Activated CD4-positive, alpha-beta memory T cell treated with anti-CD3 and anti-CD28 coated beads, Interleukin-2, amount 10 ng/mL, durations not matched to agents 7 days and 5 days (primary cell): ENCODE measurements at regions of chr20 and their contacts with region 1.

Region 1: DNA sequence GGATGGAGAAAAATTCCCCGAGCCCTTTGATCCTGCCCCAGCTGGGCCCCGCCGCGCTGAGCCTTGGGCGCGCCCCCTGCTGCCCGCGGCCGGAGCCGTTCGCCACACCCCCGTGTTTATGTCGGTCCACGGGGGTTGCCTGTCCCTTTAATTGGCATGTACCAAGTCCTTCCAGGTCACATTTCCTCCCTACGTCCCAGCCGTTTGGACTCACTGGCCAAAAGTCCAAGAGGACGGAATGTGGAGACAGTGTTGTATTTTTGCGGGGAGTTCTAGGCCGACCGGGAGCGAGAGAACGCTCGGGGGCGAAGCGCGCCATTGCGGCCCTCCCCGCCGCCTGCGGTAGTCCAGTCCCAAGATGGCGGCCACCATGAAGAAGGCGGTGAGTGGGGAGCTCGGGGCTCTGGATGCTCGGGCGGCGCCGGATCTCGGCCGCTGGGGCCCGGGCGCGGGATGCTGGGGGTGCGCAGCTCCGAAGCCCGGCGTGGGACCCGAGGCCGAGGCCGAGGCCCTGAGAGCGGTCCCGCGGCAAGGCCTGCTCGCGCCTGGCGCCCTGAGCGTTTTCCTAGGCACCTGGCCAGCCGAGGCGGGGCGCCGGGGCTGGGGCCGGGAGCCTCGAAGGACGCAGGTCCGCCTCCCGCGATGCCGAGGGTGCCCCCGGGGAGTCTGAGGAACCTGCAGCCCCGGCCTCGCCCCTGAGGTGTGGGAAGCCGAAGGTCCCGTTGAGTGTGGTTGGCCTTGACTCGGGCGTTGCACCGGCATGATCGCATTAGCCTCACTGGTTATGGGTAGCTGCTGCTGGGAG is at the start of gene PFDN4:
- DNase-seq: peak; percentile 79
- H3K4me3 Mint-ChIP-seq: peak within 1 kb of the TSS; percentile 93
- H3K27ac Mint-ChIP-seq: peak within 1 kb of the TSS; percentile 96
- H3K4me1 Mint-ChIP-seq: peaks cover 21% of the 10 kb centered on the region
- H3K27me3 Mint-ChIP-seq: no peaks in the 10 kb centered on the region
- total RNA-seq, gene PFDN4: 28.1 to 30.3 TPM

Region 2: DNA sequence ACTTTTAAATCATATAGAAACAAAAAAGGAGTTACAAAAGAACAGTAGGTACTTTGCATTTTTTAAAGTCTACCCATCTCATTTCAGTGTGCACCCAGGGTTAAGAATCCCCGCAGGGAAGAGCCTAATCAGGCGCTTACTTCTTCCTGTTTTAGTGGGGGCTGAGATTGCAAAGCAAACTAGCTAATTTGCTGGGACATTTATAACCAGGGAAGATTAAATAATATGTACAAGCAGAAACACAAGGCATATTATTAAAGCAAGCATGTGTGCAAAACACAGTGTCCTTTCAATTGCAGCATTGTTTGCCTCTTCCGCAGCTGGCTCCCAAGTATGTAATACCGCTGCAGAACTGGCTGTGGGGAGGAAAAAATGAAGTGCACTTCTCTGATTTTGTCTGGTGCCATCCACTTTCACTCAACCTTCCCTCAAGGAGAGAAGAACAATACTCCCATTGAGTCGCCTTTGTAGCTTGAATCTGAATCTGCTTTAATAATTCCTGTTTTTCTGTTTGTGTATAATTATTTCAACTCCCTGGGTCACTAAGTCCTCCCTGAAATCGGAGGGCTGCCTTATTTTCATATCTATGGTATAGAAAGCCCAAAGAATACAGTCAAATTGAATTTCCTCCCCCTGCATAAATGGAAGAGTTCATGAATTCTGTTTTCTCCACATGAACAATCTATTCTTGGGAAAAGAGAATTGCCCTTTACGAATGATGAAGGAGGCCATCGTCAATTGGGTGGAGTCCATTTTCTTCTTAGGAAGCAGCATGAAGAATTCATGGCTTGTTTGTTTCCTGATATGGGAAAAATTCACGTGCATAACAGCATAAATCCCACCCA is 114.3 kb before region 1 on chr20:
- CTCF ChIA-PET with region 1: interaction called, 13 read pairs
- POLR2A ChIA-PET with region 1: interaction called, 8 read pairs
- DNase-seq: no peak
- H3K4me3 Mint-ChIP-seq: no peak overlapping the region
- H3K27ac Mint-ChIP-seq: no peak overlapping the region
- H3K4me1 Mint-ChIP-seq: no peaks in the 10 kb centered on the region
- H3K27me3 Mint-ChIP-seq: peaks cover 12% of the 10 kb centered on the region

Region 3: DNA sequence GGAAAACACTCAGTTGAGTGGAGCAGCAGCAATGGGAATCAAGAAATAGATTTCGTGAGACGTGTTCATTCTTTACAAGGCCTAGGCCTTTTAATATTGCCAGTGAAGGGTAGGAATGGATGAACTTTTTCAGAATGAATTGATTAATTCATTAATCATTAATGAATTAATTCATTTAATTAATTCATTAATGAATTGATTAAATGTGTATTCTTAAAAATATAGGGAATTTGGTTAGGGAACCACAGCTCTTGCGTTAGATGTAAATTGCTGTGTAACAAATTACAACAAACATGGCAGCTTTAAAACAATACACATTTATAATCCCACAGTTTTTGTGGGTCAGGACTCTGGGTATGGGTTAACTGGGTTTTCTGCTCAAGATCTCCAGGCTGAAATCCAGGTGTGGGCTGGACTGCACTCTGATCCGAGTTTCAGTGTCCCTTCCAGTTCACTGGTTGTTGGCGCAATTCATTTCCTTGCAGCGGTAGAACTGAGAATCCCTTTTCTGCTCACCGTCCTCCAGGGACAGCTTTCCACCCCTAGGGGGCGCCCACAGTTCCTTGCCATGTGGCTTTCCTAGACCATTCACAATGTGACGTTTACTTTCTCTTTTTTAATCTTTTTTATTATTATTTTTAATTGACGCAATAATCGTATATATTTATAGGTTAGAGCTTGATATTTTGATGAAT is 104.7 kb before region 1 on chr20:
- CTCF ChIA-PET with region 1: interaction called, 21 read pairs
- POLR2A ChIA-PET with region 1: interaction called, 8 read pairs
- DNase-seq: peak; percentile 78
- H3K4me3 Mint-ChIP-seq: no peak overlapping the region
- H3K27ac Mint-ChIP-seq: no peak overlapping the region
- H3K4me1 Mint-ChIP-seq: peaks cover 2% of the 10 kb centered on the region
- H3K27me3 Mint-ChIP-seq: peaks cover 10% of the 10 kb centered on the region

Region 4: GRCh38 chr20:54134445-54135209 is 73.3 kb before region 1 on chr20:
- CTCF ChIA-PET with region 1: no interaction called
- POLR2A ChIA-PET with region 1: no interaction called
- DNase-seq: no peak
- H3K4me3 Mint-ChIP-seq: no peak overlapping the region
- H3K27ac Mint-ChIP-seq: no peak overlapping the region
- H3K4me1 Mint-ChIP-seq: no peaks in the 10 kb centered on the region
- H3K27me3 Mint-ChIP-seq: peaks cover 8% of the 10 kb centered on the region

Region 5: DNA sequence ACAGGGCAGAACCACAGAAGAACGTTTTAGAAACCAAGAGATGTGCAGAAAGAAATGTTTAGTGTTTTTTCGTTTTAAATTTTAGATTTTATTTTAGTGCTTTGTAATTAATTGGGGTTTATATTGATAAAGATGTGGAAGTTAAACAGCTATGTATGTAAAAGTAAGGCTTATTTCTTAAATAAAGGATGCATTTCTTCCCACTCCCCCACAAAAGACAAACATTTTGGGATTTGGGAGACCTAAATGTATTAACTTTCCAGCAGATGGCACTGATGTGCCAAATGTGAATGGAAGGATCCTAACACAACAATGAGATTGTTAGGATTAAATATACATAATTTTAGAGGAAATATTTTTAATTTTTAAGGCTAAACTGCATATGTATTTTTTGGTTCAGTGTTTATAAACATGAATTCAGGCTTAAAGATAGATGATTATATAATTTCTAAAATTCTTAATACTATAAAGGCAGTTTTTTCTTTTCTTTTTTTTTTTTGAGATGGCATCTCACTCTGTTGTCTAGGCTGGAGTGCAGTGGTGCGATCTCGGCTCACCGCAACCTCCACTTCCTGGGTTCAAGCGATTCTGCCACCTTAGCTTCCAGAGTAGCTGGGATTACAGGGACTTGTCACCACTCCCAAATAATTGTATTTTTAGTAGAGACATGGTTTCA is 11.9 kb after region 1 on chr20:
- CTCF ChIA-PET with region 1: interaction called, 11 read pairs
- POLR2A ChIA-PET with region 1: interaction called, 6 read pairs
- DNase-seq: no peak
- H3K4me3 Mint-ChIP-seq: no peak overlapping the region
- H3K27ac Mint-ChIP-seq: no peak overlapping the region
- H3K4me1 Mint-ChIP-seq: peaks cover 20% of the 10 kb centered on the region
- H3K27me3 Mint-ChIP-seq: no peaks in the 10 kb centered on the region

Region 6: DNA sequence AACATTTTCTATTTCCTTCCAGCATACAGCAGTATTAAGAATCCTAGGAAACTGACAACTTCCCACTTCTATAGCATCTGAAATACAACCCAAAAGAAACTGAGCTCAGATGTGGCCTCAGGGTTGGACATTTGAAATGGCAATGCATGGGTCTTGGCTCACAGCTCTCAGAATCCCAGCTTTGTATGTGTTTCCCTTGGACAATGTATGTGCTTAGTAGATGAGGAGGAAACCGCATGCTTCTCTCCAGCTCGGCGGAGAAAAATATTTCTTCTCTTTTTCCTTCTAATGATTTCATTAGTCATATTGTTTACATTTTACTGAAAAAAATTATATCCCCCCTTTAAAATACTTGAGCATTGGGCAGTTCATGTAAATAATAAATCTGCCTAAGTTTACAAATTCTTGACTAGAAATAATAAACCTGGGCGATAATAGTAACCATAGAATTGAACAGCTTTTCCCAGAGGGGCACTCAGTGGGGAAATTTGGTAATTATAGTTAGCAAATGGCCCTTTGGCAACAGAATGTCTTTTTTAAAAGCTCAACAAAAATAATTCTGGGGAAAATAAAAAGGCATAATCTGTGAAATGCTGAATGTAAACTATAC is 55.2 kb after region 1 on chr20:
- CTCF ChIA-PET with region 1: no interaction called
- POLR2A ChIA-PET with region 1: no interaction called
- DNase-seq: no peak
- H3K4me3 Mint-ChIP-seq: no peak overlapping the region
- H3K27ac Mint-ChIP-seq: no peak overlapping the region
- H3K4me1 Mint-ChIP-seq: no peaks in the 10 kb centered on the region
- H3K27me3 Mint-ChIP-seq: peaks cover 4% of the 10 kb centered on the region

Region 7: GRCh38 chr20:54355641-54356280 is 147.8 kb after region 1 on chr20:
- CTCF ChIA-PET with region 1: no interaction called
- POLR2A ChIA-PET with region 1: no interaction called
- DNase-seq: no peak
- H3K4me3 Mint-ChIP-seq: no peak overlapping the region
- H3K27ac Mint-ChIP-seq: no peak overlapping the region
- H3K4me1 Mint-ChIP-seq: peaks cover 4% of the 10 kb centered on the region
- H3K27me3 Mint-ChIP-seq: no peaks in the 10 kb centered on the region

Region 8: DNA sequence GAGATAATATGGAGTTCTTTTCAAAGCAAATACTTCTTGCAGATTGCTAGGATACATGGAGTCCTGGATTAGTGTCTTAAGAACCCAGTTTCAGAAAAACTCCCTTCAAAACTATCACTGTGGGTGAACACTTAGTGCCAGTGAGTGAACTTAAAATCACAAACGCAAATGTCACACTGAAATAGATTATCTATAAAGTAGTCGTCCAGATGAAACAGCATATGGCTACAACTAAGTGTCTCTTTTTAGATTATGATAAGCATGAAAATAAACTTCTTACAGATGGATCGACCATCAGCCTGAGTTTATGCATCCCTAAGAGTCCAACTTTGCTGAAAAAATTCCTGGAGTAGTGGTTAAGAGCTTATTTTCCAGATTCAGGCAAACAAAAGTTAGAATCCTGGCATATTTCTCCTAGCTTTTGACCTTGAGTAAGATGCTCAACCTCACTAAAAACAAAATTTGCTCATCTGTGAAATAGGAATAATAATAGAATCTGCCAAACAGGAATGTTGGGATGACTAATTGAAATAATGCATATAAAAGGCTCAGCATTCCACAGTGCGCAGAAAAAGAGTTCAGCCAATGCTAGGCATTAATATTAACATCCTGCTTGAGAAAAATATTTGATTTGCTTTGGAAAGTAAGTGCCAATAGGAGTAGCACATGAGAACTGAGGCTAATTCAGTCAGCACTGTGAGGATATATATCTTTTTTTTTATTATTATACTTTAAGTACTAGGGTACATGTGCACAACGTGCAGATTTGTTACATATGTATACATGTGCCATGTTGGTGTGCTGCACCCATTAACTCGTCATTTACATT is 338.0 kb after region 1 on chr20:
- CTCF ChIA-PET with region 1: no interaction called
- POLR2A ChIA-PET with region 1: no interaction called
- DNase-seq: no peak
- H3K4me3 Mint-ChIP-seq: no peak overlapping the region
- H3K27ac Mint-ChIP-seq: no peak overlapping the region
- H3K4me1 Mint-ChIP-seq: no peaks in the 10 kb centered on the region
- H3K27me3 Mint-ChIP-seq: no peaks in the 10 kb centered on the region